BJ (cell line): ENCODE measurements at regions of chr10 and their contacts with region 1.

Region 1: GRCh38 chr10:101214446-101215396 is 14.5 kb downstream of the LBX1 start:
- DNase-seq: no peak
- H3K4me3 ChIP-seq: no peak overlapping the region
- H3K27me3 ChIP-seq: peaks cover 48% of the 10 kb centered on the region
- CTCF ChIP-seq: peak; percentile 93

Region 2: DNA sequence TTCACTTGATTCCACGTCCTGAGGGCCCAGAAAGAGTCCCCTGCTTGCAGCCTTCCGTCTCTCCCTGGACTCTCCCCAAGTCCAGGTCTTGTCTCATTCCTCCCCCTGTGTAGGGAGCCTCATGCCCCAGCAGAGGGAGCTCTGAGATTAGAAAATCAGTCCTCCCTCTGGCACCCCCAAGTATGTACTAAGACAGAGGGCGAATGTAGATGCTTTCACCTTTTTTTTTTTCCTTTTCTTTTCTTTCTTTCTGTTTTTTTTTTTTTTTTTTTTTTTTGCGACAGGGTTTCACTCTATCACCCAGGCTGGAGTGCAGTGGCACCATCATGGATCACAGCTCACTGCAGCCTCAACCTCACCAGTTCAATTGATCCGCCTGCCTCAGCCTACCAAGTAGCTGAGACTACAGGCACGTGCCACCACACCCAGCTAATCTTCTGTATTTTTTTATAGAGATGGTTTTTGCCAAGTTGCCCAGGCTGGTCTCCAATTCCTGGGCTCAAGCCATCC is 173.4 kb before region 1 on chr10:
- CTCF ChIA-PET with region 1: no interaction called
- POLR2A ChIA-PET with region 1: no interaction called
- DNase-seq: peak; percentile 46
- H3K4me3 ChIP-seq: no peak overlapping the region
- H3K27me3 ChIP-seq: no peaks in the 10 kb centered on the region
- CTCF ChIP-seq: peak; percentile 88

Region 3: DNA sequence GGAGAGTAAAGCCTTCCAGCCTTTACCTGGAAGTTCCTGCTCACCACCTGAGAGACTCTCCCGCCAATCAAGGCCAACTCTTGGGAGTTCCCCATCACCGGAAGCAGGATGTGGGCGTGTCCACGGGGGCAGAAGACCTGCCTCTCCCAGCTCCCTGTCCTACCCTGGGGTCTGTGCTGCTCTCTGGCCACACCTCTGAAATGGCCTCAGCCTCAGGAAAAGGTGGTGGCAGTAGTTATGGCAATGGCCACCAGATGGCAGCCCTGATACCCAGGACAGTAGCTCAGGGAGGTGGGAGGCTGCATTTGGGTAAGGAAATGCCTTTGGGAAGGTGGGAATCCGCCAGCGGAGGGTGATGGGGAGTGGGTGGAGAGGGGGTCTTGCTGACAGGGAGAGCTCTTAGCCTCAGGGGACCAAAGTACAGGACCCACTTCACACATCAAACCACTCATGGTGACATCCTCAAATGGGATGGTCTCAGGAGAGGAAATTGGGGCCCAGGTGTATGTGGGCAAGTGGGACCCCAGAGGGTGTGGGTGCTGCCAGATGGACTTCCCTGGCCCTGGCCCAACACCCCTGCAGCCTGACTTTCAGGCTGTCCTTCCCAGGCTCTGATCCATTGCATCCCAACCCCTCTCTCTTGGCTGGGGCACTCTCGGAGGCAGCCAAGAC is 119.0 kb before region 1 on chr10:
- CTCF ChIA-PET with region 1: no interaction called
- POLR2A ChIA-PET with region 1: no interaction called
- DNase-seq: no peak
- H3K4me3 ChIP-seq: no peak overlapping the region
- H3K27me3 ChIP-seq: peaks cover 26% of the 10 kb centered on the region
- CTCF ChIP-seq: peak; percentile 89

Region 4: GRCh38 chr10:101188942-101189341 is 25.8 kb before region 1 on chr10:
- CTCF ChIA-PET with region 1: no interaction called
- POLR2A ChIA-PET with region 1: no interaction called
- DNase-seq: no peak
- H3K4me3 ChIP-seq: no peak overlapping the region
- H3K27me3 ChIP-seq: peaks cover 5% of the 10 kb centered on the region
- CTCF ChIP-seq: no peak

Region 5: GRCh38 chr10:101228153-101228973 is 13.6 kb after region 1 on chr10:
- CTCF ChIA-PET with region 1: interaction called, 26 read pairs
- POLR2A ChIA-PET with region 1: no interaction called
- DNase-seq: no peak
- H3K4me3 ChIP-seq: no peak overlapping the region
- H3K27me3 ChIP-seq: peaks cover 77% of the 10 kb centered on the region
- CTCF ChIP-seq: no peak

Region 6: GRCh38 chr10:101272229-101272868 is 57.6 kb after region 1 on chr10:
- CTCF ChIA-PET with region 1: interaction called, 26 read pairs
- POLR2A ChIA-PET with region 1: no interaction called
- DNase-seq: no peak
- H3K4me3 ChIP-seq: no peak overlapping the region
- H3K27me3 ChIP-seq: peaks cover 7% of the 10 kb centered on the region
- CTCF ChIP-seq: peak; percentile 81

Region 7: GRCh38 chr10:101311185-101312066 is 96.7 kb after region 1 on chr10:
- CTCF ChIA-PET with region 1: no interaction called
- POLR2A ChIA-PET with region 1: no interaction called
- DNase-seq: no peak
- H3K4me3 ChIP-seq: no peak overlapping the region
- H3K27me3 ChIP-seq: peaks cover 32% of the 10 kb centered on the region
- CTCF ChIP-seq: no peak

Region 8: DNA sequence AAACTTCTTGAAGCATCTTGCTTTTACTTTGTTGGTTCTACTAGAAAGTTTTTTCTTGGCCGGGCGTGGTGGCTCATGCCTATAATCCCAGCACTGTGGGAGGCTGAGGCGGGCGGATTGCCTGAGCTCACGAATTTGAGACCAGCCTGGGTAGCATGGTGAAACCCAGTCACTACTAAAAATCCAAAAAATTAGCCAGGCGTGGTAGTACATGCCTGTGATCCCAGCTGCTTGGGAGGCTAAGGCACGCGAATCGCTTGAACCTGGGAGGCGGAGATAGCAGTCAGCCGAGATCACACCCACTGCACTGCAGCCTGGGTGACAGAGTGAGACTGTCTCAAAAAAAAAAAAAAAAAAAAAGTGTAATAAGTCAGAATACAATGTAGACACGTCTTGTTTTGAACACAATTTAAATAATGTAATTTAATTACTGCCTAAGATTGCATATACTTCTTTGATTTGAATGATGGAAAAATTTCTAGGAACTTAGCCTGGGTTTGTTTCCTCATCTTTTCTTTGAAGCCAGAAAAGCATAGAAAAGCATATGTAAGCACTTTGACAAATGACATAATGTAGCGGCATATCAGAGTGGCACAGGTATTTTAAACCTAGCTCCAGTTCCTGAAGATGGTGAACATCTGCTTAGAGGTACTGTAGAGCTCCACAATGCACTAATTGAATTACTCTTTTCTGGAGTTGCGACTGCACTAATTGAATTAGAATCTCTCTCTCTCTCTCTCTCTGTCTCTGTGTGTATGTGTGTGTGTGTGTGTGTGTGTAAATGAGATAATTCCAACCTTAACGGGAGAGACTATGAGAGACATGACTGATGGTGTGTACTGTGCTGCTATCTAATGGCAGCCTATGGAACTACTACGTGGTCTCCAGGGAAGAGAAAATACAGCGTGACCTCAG is 227.1 kb after region 1 on chr10:
- CTCF ChIA-PET with region 1: interaction called, 17 read pairs
- POLR2A ChIA-PET with region 1: no interaction called
- DNase-seq: peak; percentile 8
- H3K4me3 ChIP-seq: no peak overlapping the region
- H3K27me3 ChIP-seq: no peaks in the 10 kb centered on the region
- CTCF ChIP-seq: peak; percentile 66

Region 9: GRCh38 chr10:101467286-101467770 is 252.6 kb after region 1 on chr10:
- CTCF ChIA-PET with region 1: interaction called, 49 read pairs
- POLR2A ChIA-PET with region 1: no interaction called
- DNase-seq: peak; percentile 26
- H3K4me3 ChIP-seq: no peak overlapping the region
- H3K27me3 ChIP-seq: no peaks in the 10 kb centered on the region
- CTCF ChIP-seq: peak; percentile 90

Region 10: DNA sequence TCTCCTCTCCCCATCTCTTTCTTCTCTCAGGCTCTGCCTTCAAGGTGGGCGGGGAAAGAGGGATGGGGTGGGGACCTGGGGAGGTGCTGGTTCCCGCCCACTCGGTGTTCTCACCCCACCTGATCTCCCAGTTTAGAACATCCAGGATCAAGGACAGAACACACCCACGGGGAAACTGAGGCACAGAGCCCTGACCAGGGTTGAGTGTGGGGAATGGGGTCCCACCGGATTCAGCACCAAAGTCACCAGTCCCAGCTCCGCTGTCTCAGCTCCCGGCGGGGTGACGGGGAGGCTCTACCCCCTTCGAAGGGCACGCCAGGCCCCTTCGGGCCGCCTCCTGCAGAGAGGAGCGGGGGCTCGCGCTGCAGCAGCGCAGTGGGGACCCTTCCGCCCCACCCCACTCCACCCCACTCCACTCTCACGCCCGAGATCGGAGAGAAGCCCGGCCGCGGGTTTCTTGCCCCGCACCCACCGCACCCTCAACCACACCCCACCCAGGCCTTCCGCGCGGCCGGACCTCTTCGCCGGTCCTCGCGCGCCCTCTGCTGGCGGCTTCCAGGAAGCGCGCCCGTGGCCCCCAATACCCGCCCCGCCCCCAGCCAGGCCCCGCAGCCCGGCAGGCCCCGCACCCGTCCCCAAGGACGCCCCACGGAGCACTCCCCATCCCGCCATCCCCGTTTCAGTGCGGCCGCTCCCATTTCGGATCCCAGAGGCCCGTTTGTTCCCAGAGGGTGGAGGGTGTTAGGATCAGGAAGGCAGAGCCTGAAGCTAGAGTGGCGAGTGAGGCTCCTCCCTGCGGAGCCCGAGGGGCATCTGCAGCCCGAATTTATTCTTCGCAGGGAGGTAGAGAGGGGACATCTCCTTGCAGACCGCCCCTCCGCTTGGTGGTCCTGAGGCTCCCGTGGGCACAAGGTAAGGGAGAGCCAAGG is 355.4 kb after region 1 on chr10:
- CTCF ChIA-PET with region 1: interaction called, 115 read pairs
- POLR2A ChIA-PET with region 1: no interaction called
- DNase-seq: no peak
- H3K4me3 ChIP-seq: peak overlapping the region; percentile 71
- H3K27me3 ChIP-seq: peaks cover 29% of the 10 kb centered on the region
- CTCF ChIP-seq: peak; percentile 72